ENCODE measurements at regions of chr11 and their contacts with region 1.

Region 1: DNA sequence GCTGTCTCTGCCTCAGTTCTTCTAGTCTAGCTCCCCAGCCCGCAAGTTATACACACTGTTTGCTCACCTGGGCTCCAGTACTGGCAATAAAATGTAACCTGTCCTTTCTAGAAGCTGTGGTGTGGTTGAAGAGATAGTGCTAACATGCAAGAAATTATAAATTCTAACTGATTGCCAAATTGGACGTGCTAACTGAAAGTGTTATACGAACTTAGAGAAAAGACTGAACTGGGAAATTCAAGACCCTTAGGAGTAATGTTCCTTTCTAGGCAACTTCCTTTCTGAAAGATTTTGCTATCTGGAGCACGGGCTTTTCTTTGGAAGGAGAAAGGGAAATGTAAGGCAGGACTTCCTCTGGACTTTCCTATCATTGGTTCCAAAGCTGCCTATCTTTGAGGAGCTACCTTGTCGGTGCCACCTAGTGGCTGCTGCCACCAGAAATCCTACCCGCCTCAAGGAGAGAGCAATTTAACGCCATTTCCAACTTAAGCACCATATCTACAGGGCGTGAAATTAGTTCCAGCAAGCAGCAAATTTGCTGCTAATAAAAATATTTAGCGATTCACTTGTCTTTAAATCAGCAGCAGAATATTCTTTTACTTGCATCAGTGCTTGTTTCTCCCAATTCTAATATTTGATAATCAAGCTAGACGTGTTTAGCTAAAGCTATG is 12.7 kb upstream of the TMEM218 start:
- DNase-seq: peak; percentile 36
- H3K4me3 Mint-ChIP-seq: no peak overlapping the region
- H3K27ac Mint-ChIP-seq: no peak overlapping the region
- H3K4me1 Mint-ChIP-seq: peaks cover 5% of the 10 kb centered on the region
- H3K27me3 Mint-ChIP-seq: peaks cover 36% of the 10 kb centered on the region

Region 2: DNA sequence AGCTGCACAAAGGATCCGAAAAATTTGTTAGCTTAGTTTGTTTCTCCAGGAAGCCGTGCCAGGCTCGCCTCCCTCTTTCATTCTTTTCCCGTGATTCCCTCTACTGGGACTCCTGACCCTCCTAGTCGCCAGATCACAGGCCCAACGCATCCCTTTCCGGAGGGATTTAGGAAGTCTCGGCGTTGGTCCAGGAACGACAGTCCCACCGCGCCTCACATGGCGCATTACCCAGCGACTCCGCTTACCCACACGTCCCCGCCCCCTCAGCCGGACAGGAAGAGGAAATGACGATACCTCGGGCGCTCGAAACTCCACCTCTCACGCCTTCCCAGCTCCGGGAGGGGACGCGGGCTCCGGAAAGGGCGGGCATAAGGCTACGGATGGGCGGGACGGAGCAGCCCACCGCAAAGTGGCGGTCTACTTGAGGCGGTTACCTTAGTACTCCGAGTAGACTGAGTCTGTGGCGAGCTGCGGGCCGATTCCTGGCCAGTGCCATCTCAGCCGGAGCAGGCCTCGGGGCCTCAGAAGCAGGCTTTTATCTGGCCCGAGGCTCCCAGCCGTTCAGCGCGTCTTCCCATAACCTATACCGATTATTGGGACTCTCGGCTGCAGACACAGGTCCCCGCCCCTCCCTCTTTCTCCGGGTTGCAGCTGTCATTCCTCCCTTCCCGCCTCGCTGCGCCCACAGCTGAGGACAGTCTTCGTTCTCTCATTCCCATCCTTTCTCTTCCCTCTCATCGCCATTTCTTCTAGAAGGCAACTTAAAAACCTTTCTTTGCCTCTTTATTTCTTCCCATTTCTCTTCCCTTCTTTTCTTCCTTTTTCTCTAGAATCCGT is 170.1 kb before region 1 on chr11 and contains the start of gene CCDC15:
- CTCF ChIA-PET with region 1: interaction called, 11 read pairs
- POLR2A ChIA-PET with region 1: no interaction called
- DNase-seq: peak; percentile 97
- H3K4me3 Mint-ChIP-seq: no peak within 1 kb of the TSS
- H3K27ac Mint-ChIP-seq: no peak within 1 kb of the TSS
- H3K4me1 Mint-ChIP-seq: peaks cover 20% of the 10 kb centered on the region
- H3K27me3 Mint-ChIP-seq: no peaks in the 10 kb centered on the region
- total RNA-seq, gene CCDC15: 9.2 to 9.7 TPM

Region 3: DNA sequence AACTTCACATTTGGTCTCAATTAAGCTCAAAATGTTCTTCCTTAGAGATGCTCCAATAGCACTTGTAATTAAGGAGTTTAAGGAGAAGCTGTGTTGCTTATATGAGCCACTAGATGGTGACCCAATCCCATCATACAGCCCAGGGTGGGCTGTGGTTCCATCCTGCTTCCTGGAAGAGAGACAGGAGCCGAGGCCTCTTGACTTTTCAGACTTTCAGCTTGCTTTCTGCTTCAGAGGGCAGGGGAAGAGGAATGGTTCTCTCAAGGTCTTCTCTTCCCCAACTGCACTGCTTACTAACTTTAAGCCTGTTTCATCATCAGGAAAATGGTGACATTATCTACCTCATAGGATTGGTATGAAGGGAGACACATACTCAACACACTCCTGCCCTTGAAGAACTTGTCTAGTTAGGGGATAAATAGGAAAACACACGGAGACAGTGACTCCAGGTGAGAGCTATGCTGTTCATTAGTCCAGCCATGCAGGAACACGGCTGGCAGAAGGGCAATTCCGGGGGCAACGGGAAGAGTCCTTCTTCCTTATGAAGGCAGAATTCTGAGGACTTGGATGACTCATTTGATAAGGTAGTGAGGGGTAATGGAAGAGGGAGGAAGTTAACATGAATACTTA is 32.7 kb before region 1 on chr11:
- CTCF ChIA-PET with region 1: interaction called, 27 read pairs
- POLR2A ChIA-PET with region 1: no interaction called
- DNase-seq: no peak
- H3K4me3 Mint-ChIP-seq: no peak overlapping the region
- H3K27ac Mint-ChIP-seq: no peak overlapping the region
- H3K4me1 Mint-ChIP-seq: no peaks in the 10 kb centered on the region
- H3K27me3 Mint-ChIP-seq: no peaks in the 10 kb centered on the region

Region 4: DNA sequence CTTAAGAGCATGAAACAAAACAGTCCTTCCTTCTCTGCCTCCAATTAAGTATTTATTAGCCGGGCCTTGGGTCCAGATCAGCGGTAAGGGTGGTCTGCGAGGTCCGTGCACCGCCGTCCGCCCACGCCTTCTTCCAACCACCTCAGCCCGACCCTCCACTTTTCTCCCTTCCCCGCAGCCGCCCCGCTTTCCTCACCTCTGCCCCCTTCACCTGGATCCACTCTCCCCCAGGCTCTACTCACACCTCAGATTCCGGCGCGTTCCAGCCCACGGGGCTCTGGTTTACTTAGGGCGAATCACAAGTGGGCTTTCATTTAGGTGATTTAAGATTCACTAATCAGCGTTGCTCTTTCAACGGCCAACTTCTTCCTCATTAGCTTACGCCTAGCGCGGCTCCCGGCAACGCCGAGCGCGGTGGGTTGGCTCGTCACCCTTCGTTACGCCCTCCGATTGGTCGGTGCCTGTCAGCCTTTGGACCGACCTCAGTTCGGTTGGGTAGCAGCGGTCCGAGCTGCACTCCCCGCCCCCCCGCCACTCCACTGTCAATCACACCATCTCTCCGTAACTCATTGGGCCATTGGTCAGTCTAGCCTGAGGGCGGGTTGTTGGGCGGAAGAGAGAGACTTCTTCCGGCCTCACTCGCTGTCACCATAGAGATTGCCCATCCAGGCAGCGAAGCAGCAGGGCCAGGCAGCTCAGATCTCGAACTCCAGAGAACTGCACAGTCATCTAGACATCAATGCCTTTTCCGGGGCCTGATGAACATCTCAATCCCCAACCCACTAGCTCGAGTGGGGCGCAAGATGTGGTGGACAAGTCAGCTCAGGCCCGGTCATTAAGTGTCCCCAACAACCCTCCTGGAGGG is 12.5 kb before region 1 on chr11 and contains the start of gene TMEM218:
- CTCF ChIA-PET with region 1: interaction called, 18 read pairs
- POLR2A ChIA-PET with region 1: interaction called, 16 read pairs
- DNase-seq: peak; percentile 98
- H3K4me3 Mint-ChIP-seq: peak within 1 kb of the TSS; percentile 94
- H3K27ac Mint-ChIP-seq: peak within 1 kb of the TSS; percentile 83
- H3K4me1 Mint-ChIP-seq: peaks cover 19% of the 10 kb centered on the region
- H3K27me3 Mint-ChIP-seq: peaks cover 2% of the 10 kb centered on the region
- total RNA-seq, gene TMEM218: 13.7 to 15.6 TPM

Region 5: GRCh38 chr11:125141686-125142535 is 17.8 kb after region 1 on chr11:
- CTCF ChIA-PET with region 1: interaction called, 20 read pairs
- POLR2A ChIA-PET with region 1: no interaction called
- DNase-seq: peak; percentile 51
- H3K4me3 Mint-ChIP-seq: no peak overlapping the region
- H3K27ac Mint-ChIP-seq: no peak overlapping the region
- H3K4me1 Mint-ChIP-seq: peaks cover 2% of the 10 kb centered on the region
- H3K27me3 Mint-ChIP-seq: peaks cover 25% of the 10 kb centered on the region